ENCODE measurements at regions of chr9 and their contacts with region 1.

Region 1: GRCh38 chr9:17116400-17116837 is 18.4 kb upstream of the CNTLN start:
- H3K4me3 Mint-ChIP-seq: no peak overlapping the region
- H3K27ac Mint-ChIP-seq: no peak overlapping the region
- H3K4me1 Mint-ChIP-seq: no peaks in the 10 kb centered on the region
- H3K27me3 Mint-ChIP-seq: no peaks in the 10 kb centered on the region

Region 2: GRCh38 chr9:17462869-17463464 is 346.5 kb after region 1 on chr9:
- intact Hi-C with region 1: loop called (anchors 1 kb)
- H3K4me3 Mint-ChIP-seq: no peak overlapping the region
- H3K27ac Mint-ChIP-seq: no peak overlapping the region
- H3K4me1 Mint-ChIP-seq: no peaks in the 10 kb centered on the region
- H3K27me3 Mint-ChIP-seq: no peaks in the 10 kb centered on the region